AG04450 (cell line): ENCODE measurements at regions of chr19 and their contacts with region 1.

Region 1: GRCh38 chr19:46661020-46661731 is at the start of gene DACT3:
- DNase-seq: peak; percentile 100
- H3K4me3 ChIP-seq: peak within 1 kb of the TSS; percentile 67
- H3K27ac ChIP-seq: peak within 1 kb of the TSS; percentile 65
- H3K27me3 ChIP-seq: no peaks in the 10 kb centered on the region
- CTCF ChIP-seq: no peak
- polyA plus RNA-seq, gene DACT3: 6.1 and 6.9 TPM in 2 replicates

Region 2: GRCh38 chr19:46529622-46530462 is 131.3 kb before region 1 on chr19:
- CTCF ChIA-PET with region 1: interaction called, 10 read pairs
- POLR2A ChIA-PET with region 1: interaction called, 4 read pairs
- DNase-seq: no peak
- H3K4me3 ChIP-seq: no peak overlapping the region
- H3K27ac ChIP-seq: no peak overlapping the region
- H3K27me3 ChIP-seq: peaks cover 10% of the 10 kb centered on the region
- CTCF ChIP-seq: peak; percentile 96

Region 3: DNA sequence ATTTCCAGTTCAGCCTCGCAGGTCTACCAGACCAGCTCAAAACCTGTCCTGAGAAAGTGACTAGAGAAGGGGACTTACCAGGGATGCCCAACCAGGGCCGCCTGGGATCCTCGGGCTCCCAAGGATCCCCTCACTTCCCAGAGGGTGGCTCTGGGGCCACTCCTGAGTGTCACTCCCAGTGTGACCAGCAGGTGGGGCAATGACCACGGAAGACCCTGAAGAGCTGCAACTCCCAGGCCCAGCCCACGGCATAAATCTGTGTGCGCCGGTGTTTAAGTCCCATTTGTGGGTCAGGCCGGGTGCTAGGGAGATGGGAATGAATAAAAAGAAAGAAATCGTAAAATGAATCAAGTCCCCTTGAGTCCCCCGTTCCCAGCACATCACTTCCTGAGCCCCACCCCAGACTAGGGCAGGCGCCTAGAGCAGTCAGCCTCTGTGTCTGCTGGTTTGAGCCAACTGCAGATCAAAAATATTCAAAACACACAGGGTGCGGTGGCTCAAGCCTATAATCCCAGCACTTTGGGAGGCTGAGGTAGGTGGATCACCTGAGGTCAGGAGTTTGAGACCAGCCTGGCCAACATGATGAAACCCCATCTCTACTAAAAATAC is 47.0 kb before region 1 on chr19:
- CTCF ChIA-PET with region 1: interaction called, 296 read pairs
- POLR2A ChIA-PET with region 1: interaction called, 7 read pairs
- DNase-seq: no peak
- H3K4me3 ChIP-seq: no peak overlapping the region
- H3K27ac ChIP-seq: no peak overlapping the region
- H3K27me3 ChIP-seq: no peaks in the 10 kb centered on the region
- CTCF ChIP-seq: peak; percentile 87

Region 4: DNA sequence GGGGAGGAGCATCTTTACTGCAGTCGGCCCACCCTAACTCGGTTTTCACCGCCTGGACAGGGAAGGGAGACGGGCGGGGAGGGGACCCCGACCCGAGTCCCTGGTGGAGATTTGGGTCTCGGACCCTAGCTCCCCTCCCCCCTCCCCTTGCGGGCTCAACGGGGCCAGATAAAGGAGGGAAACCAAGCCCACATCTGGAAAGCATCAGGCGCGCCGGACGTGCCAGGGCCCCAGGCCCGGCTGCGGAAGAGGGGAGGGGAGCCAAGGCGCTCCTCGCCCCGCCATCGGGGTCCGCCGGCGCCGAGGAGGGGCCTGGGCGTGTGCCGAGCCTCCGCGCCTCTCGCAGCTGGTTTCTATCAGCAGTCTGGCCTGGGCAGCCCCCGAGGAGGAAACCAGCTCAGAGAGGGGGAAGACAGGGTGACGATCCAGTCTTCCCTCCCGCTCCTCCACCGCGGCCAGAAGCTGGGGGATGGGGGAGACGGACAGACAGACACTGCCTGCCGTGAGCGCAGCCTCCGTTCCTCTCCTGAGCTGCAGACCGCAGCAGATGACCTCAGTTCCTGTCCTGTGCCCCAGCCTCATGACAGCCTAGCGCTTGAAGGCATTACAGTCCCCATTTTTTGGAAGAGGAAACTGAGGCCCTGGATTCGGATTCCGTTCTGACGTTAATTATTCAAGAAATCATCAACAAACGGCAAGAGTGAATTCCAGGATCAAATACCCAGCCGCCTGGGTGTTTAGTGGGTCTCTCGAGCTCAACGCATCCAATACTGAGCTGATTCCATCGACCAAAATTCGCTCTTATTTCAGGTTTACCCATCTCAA is 21.6 kb before region 1 on chr19:
- CTCF ChIA-PET with region 1: interaction called, 12 read pairs
- POLR2A ChIA-PET with region 1: interaction called, 4 read pairs
- DNase-seq: no peak
- H3K4me3 ChIP-seq: peak overlapping the region; percentile 50
- H3K27ac ChIP-seq: peak overlapping the region; percentile 68
- H3K27me3 ChIP-seq: peaks cover 7% of the 10 kb centered on the region
- CTCF ChIP-seq: no peak

Region 5: DNA sequence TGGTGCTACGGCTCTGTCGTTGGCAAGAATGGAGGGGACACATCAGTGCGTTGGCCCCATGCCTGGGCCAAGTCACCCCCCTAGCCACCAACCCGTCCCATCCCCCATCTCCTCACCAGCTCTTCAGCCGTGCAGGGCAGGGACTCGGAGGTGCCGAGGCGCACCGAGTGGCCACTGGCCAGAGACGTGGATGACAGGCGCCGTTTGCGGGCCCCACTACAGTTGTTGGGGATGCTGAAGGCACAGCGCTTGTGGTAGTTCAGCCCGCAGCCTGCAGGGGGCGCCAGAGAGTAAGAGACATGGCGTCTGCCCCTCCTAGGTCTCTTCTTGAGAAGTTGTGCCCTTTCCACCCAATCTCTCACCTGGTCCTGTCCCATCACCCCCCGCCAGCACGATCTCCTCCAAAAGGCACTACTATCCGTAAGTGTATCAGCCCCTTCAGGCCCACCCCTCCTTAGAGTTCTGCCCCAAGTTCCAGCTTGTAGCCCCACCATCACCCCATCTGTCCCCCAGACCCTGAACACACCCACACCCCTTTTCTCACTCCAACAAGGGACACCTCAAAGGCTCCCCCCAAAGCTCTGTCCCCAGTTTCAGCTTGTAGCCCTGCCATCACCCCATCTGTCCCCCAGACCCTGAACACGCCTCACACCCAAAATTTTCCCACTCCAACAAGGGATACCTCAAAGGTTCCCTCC is 43.4 kb after region 1 on chr19:
- CTCF ChIA-PET with region 1: interaction called, 11 read pairs
- POLR2A ChIA-PET with region 1: no interaction called
- DNase-seq: no peak
- H3K4me3 ChIP-seq: no peak overlapping the region
- H3K27ac ChIP-seq: no peak overlapping the region
- H3K27me3 ChIP-seq: no peaks in the 10 kb centered on the region
- CTCF ChIP-seq: peak; percentile 91